Gastrocnemius medialis (tissue), 4 donors: ENCODE measurements at regions of chr5 and their contacts with region 1.

Region 1: GRCh38 chr5:64505769-64506566 is at the start of gene RGS7BP:
- DNase-seq: no peak
- ATAC-seq: peak; percentile 39 to 55
- H3K4me3 ChIP-seq: peak within 1 kb of the TSS; percentile 55 to 65 (median 57)
- H3K27ac ChIP-seq: peak within 1 kb of the TSS in 1 of 4 donors; percentile 19
- H3K4me1 ChIP-seq: peaks cover 5 to 10% of the 10 kb centered on the region in 2 donors
- H3K27me3 ChIP-seq: peaks cover 0 to 3% (median 0%) of the 10 kb centered on the region in 3 donors
- CTCF ChIP-seq: no peak
- POLR2A ChIP-seq: no peak
- total RNA-seq, gene RGS7BP: 0.10 to 0.86 (median 0.47) TPM

Region 2: GRCh38 chr5:64077589-64077988 is 428.4 kb before region 1 on chr5:
- in situ Hi-C with region 1: no loop called
- intact Hi-C with region 1: no loop called
- DNase-seq: no peak
- ATAC-seq: no peak
- H3K4me3 ChIP-seq: no peak overlapping the region
- H3K27ac ChIP-seq: no peak overlapping the region
- H3K4me1 ChIP-seq: no peaks in the 10 kb centered on the region
- H3K27me3 ChIP-seq: no peaks in the 10 kb centered on the region
- CTCF ChIP-seq: no peak
- POLR2A ChIP-seq: no peak

Region 3: DNA sequence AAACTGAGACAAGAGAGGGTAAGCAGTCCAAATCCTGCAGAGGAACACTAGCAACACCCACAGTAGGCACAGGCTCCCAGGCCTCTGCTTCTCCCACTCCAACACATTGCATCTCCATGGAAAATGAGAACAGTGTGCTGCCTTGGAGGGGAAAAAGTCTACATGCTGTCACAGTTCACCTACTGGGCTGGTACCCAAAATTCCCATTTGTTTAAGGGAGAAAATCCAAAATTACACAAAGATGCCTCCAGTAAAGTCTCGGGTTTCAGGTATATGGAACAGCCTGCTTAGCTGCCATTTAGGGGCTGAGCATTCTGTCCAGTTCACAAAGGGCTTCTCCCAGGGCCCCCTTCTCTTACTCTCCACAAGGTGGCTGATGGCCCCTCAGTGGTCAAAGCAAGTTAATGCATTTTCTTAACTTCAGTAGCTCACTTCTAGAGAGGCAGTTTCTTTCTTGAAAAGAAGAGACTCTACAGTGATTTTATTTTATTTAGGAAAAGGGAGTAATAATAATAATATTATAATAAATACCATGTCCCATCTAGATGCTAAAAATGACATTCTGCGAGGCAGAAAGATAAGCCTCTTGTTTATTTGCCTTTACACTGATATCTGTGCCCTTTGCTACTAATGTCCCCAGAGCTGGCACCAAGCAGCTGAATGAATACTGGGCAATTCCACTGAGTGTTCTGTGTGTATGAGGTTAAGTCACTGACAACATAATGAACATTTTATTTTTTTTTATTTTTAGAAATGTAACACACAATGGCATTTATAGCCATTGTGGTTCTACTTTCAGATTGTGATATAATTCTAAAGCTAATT is 89.3 kb after region 1 on chr5:
- in situ Hi-C with region 1: no loop called
- intact Hi-C with region 1: loop called (anchors 10 kb)
- DNase-seq: no peak
- ATAC-seq: no peak
- H3K4me3 ChIP-seq: no peak overlapping the region
- H3K27ac ChIP-seq: no peak overlapping the region
- H3K4me1 ChIP-seq: no peaks in the 10 kb centered on the region
- H3K27me3 ChIP-seq: no peaks in the 10 kb centered on the region
- CTCF ChIP-seq: no peak
- POLR2A ChIP-seq: no peak

Region 4: GRCh38 chr5:64784451-64785025 is 278.6 kb after region 1 on chr5:
- in situ Hi-C with region 1: no loop called
- intact Hi-C with region 1: no loop called
- DNase-seq: peak; percentile 18 to 47
- ATAC-seq: peak; percentile 52 to 81
- H3K4me3 ChIP-seq: no peak overlapping the region
- H3K27ac ChIP-seq: no peak overlapping the region
- H3K4me1 ChIP-seq: no peaks in the 10 kb centered on the region
- H3K27me3 ChIP-seq: no peaks in the 10 kb centered on the region
- CTCF ChIP-seq: peak; percentile 73 to 84 (median 78)
- POLR2A ChIP-seq: no peak